ENCODE measurements at regions of chr16 and their contacts with region 1.

Region 1: GRCh38 chr16:13120557-13120956 is 219.2 kb downstream of the SHISA9 start:
- DNase-seq: no peak
- H3K4me3 ChIP-seq: no peak overlapping the region
- H3K27ac ChIP-seq: no peak overlapping the region
- H3K4me1 ChIP-seq: no peaks in the 10 kb centered on the region
- H3K27me3 ChIP-seq: no peaks in the 10 kb centered on the region
- CTCF ChIP-seq: no peak

Region 2: DNA sequence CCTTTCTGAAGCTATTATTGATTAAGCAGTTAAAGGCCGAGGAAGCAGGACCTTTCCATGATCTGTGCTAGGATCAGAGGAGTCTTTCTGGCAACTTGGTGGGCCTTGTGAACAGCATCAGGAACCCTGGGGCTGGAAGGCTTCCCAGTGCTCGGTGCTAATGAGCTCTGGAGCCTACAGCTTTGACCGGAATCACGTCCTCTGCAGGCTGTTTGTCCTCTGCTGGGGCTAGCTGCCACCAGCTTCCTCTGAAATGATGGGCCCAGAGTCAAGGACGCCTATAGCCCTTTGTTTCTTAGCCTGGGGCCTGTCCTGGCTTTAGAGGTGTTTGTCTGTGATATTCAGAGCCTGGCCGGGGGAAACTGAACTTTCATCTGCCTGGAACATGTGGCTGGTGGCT is 107.5 kb before region 1 on chr16:
- CTCF ChIA-PET with region 1: interaction called, 10 read pairs
- POLR2A ChIA-PET with region 1: no interaction called
- intact Hi-C with region 1: no loop called
- DNase-seq: no peak
- H3K4me3 ChIP-seq: no peak overlapping the region
- H3K27ac ChIP-seq: no peak overlapping the region
- H3K4me1 ChIP-seq: no peaks in the 10 kb centered on the region
- H3K27me3 ChIP-seq: no peaks in the 10 kb centered on the region
- CTCF ChIP-seq: no peak